Activated CD4-positive, alpha-beta T cell treated with anti-CD3 and anti-CD28 coated beads, Interleukin-2, amount 10 ng/mL, durations not matched to agents 24 days and 14 days (primary cell): ENCODE measurements at regions of chr1 and their contacts with region 1.

Region 1: GRCh38 chr1:28505406-28506187 is at the start of gene RCC1:
- DNase-seq: peak; percentile 99
- H3K4me3 Mint-ChIP-seq: peak within 1 kb of the TSS; percentile 92
- H3K27ac Mint-ChIP-seq: peak within 1 kb of the TSS; percentile 99
- H3K4me1 Mint-ChIP-seq: peaks cover 29% of the 10 kb centered on the region
- H3K27me3 Mint-ChIP-seq: peaks cover 2% of the 10 kb centered on the region
- total RNA-seq, gene RCC1: 143 and 145 TPM in 2 replicates

Region 2: DNA sequence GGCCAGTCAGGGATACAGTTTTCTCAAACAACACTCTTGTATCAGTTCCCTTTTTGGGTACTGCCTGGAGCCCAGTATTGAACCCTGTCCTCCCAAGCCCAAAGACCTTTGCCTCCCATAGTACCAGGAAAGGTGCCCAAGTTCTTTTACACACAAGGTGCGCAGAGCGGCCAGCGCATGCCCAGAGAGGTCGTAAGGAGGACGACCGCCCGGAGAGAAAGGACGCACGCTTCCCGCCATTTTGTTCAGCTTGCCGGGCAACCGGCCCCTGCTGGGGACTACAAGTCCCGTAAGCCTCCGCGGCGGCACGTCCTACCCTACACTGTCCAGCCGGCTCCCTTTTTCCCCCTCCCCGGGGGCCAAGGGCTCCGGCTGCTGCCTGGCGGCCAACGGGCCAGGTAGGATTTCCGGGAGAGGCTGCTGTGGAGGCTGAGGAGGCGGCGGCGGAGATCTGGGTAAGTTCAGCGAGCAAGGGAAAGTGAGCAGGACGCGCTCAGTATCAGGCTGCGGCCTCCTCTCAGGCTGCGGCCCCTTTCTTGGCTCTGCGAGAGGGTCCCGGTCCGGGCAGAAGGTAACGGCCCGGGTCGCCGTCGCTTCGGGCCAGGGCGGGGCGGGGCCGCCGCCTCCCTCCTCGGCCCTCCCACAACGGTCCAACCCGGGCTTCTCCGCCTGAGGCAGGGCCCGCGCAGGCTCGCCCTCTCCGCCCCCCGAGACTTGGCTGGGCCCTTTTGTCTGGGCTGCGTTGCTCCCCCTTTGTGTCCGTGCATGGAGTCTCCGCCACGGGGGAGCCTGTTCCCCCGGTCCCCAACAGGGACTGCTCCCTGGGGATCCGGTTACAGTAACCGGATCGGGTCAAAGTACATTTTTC is 136.0 kb before region 1 on chr1 and contains the start of gene PHACTR4:
- intact Hi-C with region 1: loop called (anchors 2 kb)
- DNase-seq: peak; percentile 95
- H3K4me3 Mint-ChIP-seq: peak within 1 kb of the TSS; percentile 95
- H3K27ac Mint-ChIP-seq: peak within 1 kb of the TSS; percentile 95
- H3K4me1 Mint-ChIP-seq: peaks cover 32% of the 10 kb centered on the region
- H3K27me3 Mint-ChIP-seq: no peaks in the 10 kb centered on the region
- total RNA-seq, gene PHACTR4: 29.6 and 30.5 TPM in 2 replicates

Region 3: DNA sequence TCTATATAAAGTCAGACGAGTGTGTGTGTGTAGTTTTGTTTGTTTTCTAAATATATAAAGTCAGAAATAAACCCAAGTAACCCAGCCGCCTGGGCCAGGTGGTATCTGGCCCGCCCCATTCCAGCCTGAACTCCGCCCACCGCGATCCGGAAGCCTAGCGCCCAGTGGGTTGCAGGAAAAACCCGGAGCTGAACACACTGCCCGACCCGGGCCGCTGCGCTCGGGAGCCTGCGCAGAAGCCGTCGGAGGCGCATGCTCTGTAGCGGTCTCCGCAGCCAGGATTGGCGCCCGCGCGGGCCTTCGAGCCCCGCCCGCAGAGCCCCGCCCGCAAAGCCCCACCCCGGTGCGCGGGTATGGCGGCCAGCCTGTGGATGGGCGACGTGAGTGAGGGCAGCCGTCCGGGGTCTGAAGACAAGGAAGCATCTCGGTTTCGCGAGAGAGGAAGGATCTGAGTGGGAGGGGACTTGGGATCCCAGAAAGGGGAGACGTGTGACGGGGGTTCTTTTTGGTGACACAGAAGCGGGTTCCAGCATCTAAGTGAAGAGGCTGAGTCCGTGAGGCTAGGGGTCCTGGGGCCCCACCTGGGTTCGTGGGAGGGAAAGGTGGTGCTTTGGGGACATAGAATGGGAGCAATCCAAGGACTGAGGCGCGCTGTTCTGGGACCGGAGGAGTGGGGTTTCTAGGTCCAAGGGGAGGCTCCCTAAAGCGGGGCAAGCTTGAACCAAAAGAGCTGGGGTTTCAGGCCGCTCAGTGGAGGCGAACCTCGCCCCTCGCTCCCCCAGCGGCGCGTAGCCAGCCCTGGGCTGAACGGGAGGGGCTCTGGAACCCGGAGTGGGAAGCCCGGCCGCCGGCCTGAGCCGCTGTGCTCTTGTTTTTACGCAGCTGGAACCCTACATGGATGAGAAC is 47.4 kb after region 1 on chr1 and contains the start of gene TRNAU1AP:
- intact Hi-C with region 1: loop called (anchors 1 kb)
- DNase-seq: peak; percentile 99
- H3K4me3 Mint-ChIP-seq: peak within 1 kb of the TSS; percentile 100
- H3K27ac Mint-ChIP-seq: peak within 1 kb of the TSS; percentile 99
- H3K4me1 Mint-ChIP-seq: peaks cover 17% of the 10 kb centered on the region
- H3K27me3 Mint-ChIP-seq: no peaks in the 10 kb centered on the region
- total RNA-seq, gene TRNAU1AP: 47.5 and 50.7 TPM in 2 replicates